Right cardiac atrium (tissue), 5 donors: ENCODE measurements at regions of chr20 and their contacts with region 1.

Region 1: GRCh38 chr20:5126512-5127203 is at the start of gene CDS2:
- DNase-seq: peak; percentile 100
- ATAC-seq: peak; percentile 98
- H3K4me3 ChIP-seq: peak within 1 kb of the TSS; percentile 80
- H3K27ac ChIP-seq: peak within 1 kb of the TSS; percentile 90
- H3K4me1 ChIP-seq: peaks cover 2% of the 10 kb centered on the region
- H3K27me3 ChIP-seq: no peaks in the 10 kb centered on the region
- total RNA-seq, gene CDS2: 79.4 to 98.6 (median 88.2) TPM

Region 2: GRCh38 chr20:4585104-4585753 is 541.4 kb before region 1 on chr20:
- intact Hi-C with region 1: no loop called
- DNase-seq: no peak
- ATAC-seq: no peak
- H3K4me3 ChIP-seq: no peak overlapping the region
- H3K27ac ChIP-seq: no peak overlapping the region
- H3K4me1 ChIP-seq: no peaks in the 10 kb centered on the region
- H3K27me3 ChIP-seq: peaks cover 2% of the 10 kb centered on the region

Region 3: DNA sequence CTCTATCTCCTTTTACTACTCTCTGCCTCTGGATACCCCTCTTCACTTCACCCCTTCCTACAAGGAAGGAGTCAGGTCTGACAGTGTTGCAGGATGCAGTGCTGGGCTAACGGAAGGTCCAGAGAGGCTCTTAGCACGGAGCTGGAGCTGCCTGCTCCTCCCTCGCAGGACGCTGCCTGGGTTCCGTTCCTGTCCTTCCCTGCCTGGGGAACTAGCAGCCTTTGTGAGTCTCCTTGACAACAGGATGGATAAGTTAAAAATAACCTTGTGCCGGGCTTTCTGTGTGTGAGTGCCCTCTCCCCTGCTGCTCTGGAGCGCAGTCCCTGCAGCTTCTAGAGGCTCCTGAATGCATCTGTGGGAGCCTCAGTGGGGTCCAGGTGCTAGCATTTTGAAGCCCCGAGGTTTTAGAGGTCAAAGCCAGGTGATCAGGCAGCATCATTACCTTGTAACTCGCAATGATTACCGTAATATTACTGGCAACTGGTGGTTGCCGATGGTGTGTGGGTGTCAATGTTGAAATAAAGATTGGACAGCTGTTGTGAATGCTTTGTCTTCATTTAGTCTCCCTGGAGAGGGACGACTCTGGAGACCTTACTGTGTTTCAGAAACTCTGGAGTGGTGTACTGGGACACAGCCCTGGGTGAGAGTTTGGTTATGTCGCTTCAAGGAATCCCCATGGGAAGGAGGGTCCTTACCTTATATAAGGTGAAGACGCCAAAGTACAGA is 44.6 kb after region 1 on chr20:
- intact Hi-C with region 1: loop called in 1 of 4 experiments (anchors 5 kb)
- DNase-seq: peak; percentile 24 to 75 (median 75)
- ATAC-seq: peak; percentile 75 to 82
- H3K4me3 ChIP-seq: no peak overlapping the region
- H3K27ac ChIP-seq: peak overlapping the region; percentile 70
- H3K4me1 ChIP-seq: peaks cover 53% of the 10 kb centered on the region
- H3K27me3 ChIP-seq: no peaks in the 10 kb centered on the region

Region 4: GRCh38 chr20:5191829-5192569 is 65.3 kb after region 1 on chr20:
- intact Hi-C with region 1: loop called (anchors 2 to 5 kb)
- DNase-seq: no peak
- ATAC-seq: peak; percentile 58 to 67
- H3K4me3 ChIP-seq: no peak overlapping the region
- H3K27ac ChIP-seq: peak overlapping the region; percentile 70
- H3K4me1 ChIP-seq: no peaks in the 10 kb centered on the region
- H3K27me3 ChIP-seq: no peaks in the 10 kb centered on the region